Activated CD4-positive, alpha-beta T cell treated with anti-CD3 and anti-CD28 coated beads for 36 hours (primary cell): ENCODE measurements at regions of chr11 and their contacts with region 1.

Region 1: DNA sequence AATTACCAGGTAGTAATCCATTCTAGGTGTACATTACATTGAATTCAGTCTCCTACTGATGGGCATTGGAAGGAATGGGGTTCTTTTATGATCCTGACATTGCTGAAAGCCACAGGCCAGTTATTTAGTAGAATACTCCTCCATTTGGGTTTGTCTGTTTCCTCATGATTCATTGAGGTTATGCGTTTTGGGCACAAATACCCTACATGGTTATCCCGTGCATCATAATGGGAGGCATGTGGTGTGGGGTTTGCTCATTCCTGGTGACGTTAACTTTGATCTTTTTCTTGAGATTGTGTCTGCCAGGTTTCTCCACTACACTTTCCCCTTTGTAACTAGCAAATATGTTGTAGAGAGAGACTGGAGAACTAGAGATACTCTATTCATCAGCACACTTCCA is 5.5 kb downstream of the FOLR3 start:
- DNase-seq: peak; percentile 62
- ATAC-seq: peak; percentile 87
- H3K4me3 Mint-ChIP-seq: no peak overlapping the region
- H3K27ac Mint-ChIP-seq: no peak overlapping the region
- H3K4me1 Mint-ChIP-seq: peaks cover 16% of the 10 kb centered on the region
- H3K27me3 Mint-ChIP-seq: peaks cover 14% of the 10 kb centered on the region

Region 2: GRCh38 chr11:71977743-71978418 is 163.2 kb before region 1 on chr11:
- CTCF ChIA-PET with region 1: interaction called, 25 read pairs
- POLR2A ChIA-PET with region 1: no interaction called
- intact Hi-C with region 1: loop called (anchors 2 to 5 kb)
- DNase-seq: peak; percentile 69
- ATAC-seq: peak; percentile 63
- H3K4me3 Mint-ChIP-seq: no peak overlapping the region
- H3K27ac Mint-ChIP-seq: no peak overlapping the region
- H3K4me1 Mint-ChIP-seq: peaks cover 2% of the 10 kb centered on the region
- H3K27me3 Mint-ChIP-seq: no peaks in the 10 kb centered on the region

Region 3: DNA sequence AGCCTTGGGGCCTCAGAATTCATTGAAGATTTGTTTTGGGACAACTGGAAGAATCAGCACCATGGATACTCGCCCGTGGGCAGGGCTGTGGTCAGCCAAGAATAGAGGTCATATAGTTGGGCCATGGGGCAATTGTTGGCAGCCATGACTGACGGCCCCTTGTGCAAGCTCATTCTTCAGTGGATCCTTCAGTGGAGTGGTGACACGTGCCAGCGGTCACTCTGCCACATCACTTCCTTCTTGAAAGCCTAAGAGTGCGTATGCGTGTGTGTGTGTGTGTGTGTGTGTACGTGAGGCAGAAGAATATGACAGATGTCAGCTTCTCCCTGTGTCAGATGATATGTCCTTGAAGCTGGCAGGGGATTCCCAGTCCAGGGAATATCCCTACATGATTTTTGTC is 144.1 kb before region 1 on chr11:
- CTCF ChIA-PET with region 1: no interaction called
- POLR2A ChIA-PET with region 1: no interaction called
- intact Hi-C with region 1: no loop called
- DNase-seq: no peak
- ATAC-seq: no peak
- H3K4me3 Mint-ChIP-seq: no peak overlapping the region
- H3K27ac Mint-ChIP-seq: no peak overlapping the region
- H3K4me1 Mint-ChIP-seq: peaks cover 20% of the 10 kb centered on the region
- H3K27me3 Mint-ChIP-seq: no peaks in the 10 kb centered on the region

Region 4: DNA sequence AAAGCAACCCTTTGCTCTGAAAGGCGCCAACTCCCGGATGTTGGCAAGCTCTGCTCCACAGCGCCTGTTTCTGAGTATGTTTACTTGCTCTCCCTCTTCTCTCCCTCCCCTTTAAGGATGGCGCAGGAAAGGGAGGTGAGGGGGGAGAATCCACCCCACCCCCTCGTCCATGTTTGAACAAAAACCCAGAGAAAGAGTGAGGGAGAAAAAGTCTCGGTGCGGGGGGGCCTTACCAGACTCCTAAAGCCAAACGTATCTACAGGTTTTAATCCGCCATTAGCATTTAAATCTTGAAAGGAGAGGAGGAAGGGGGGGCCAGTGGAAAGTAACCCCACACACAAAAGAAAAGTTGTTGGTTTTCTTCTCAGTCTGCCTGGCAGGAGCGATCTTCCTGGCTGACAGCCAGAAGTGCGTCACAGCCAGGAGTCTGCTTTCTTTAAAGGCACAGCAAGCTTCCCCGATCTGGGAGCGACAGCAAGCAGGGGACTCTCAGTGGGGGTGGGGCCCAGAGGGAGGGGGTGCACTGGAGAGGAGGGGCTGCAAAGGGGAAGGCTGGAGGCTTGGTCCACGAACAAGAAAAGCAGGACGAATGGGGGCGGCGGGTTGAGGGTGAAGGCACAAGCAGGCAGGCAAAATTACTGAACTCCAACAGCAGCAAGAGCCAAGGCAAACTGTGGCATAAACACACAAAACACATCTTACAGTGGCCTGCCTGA is 100.2 kb before region 1 on chr11:
- CTCF ChIA-PET with region 1: interaction called, 10 read pairs
- POLR2A ChIA-PET with region 1: no interaction called
- intact Hi-C with region 1: no loop called
- DNase-seq: peak; percentile 86
- ATAC-seq: peak; percentile 76
- H3K4me3 Mint-ChIP-seq: no peak overlapping the region
- H3K27ac Mint-ChIP-seq: no peak overlapping the region
- H3K4me1 Mint-ChIP-seq: peaks cover 35% of the 10 kb centered on the region
- H3K27me3 Mint-ChIP-seq: no peaks in the 10 kb centered on the region

Region 5: DNA sequence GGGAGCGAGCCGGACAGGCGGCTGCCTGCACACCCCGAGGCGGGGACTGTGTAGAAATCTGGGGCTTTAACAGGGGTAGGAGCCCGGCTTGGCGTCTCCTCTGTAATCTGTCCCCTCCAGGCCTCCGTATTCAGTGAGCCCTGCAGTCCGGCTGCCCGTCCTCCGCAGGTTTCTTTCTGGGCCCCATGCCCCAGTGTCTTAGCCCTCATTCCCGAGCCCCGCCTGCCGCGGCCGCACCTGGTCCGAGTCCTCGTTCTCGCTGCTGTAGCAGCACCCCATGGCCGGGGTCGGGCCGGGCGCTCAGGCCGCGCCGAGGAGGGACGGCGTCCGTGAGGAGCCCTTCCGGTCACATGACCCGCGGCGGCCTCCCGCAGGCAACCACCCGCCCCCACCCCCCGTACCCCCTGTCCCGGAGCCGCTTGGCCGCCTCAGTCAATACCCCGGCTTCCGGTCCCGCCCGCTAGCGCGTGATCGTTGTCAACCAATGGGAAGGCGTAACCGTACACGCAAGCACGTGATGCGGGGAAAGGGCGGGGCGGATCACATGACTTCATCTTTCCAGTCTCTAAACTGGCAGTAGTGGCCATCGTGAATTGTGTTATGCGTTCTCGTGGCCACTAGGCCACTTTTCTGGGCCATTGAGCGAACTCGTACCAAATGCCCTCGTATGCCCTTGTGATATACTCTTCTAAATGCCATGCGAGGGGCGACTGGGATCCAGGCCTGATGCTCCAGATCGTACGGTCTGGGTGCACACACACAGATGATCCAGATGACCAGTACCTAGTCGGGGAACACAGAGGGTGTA is 37.9 kb before region 1 on chr11 and contains the start of gene LAMTOR1:
- CTCF ChIA-PET with region 1: interaction called, 8 read pairs
- POLR2A ChIA-PET with region 1: no interaction called
- intact Hi-C with region 1: loop called in 1 of 2 experiments (anchors 2 kb)
- DNase-seq: peak; percentile 99
- ATAC-seq: peak; percentile 98
- H3K4me3 Mint-ChIP-seq: peak within 1 kb of the TSS; percentile 97
- H3K27ac Mint-ChIP-seq: peak within 1 kb of the TSS; percentile 95
- H3K4me1 Mint-ChIP-seq: peaks cover 38% of the 10 kb centered on the region
- H3K27me3 Mint-ChIP-seq: no peaks in the 10 kb centered on the region
- total RNA-seq, gene LAMTOR1: 50.7 to 52.2 TPM

Region 6: DNA sequence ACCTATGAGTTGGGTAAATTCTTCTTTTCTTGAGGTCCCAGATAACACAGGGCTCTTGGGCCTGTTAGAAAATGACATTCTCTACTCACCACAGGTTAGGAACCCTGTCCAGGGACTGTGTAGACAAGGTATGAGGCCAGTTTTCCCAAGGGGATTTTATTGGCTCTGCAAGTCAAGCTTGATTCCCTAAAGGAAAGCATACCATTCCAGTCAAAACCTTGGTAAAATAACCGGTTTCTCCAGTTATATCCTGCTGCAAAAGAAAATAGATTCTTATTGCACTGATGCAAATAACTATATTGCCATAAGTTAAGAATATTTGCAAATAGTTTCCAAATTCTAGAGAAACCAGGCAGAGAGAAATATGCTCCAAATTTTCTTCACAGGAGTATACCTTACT is 15.1 kb before region 1 on chr11:
- CTCF ChIA-PET with region 1: interaction called, 11 read pairs
- POLR2A ChIA-PET with region 1: no interaction called
- intact Hi-C with region 1: no loop called
- DNase-seq: no peak
- ATAC-seq: no peak
- H3K4me3 Mint-ChIP-seq: no peak overlapping the region
- H3K27ac Mint-ChIP-seq: no peak overlapping the region
- H3K4me1 Mint-ChIP-seq: no peaks in the 10 kb centered on the region
- H3K27me3 Mint-ChIP-seq: peaks cover 7% of the 10 kb centered on the region

Region 7: DNA sequence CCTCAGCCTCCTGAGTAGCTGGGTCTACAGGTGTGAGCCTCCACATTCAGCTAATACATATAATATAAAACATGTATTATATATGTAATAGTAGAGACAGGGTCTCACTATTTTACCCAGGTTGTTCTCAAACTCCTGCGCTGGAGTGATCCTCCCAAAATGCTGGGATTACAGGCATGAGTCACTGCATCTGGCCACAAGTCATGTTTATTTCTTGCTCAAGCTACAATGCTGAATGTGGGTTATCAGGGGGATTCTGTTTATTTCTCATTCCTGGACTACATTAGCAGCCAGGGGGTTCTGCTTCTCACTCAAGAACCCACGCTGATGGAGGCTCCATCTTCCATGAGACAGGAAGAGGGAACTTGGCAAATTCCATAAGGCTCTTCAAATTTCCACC is 19.3 kb after region 1 on chr11:
- CTCF ChIA-PET with region 1: interaction called, 19 read pairs
- POLR2A ChIA-PET with region 1: no interaction called
- intact Hi-C with region 1: no loop called
- DNase-seq: no peak
- ATAC-seq: no peak
- H3K4me3 Mint-ChIP-seq: no peak overlapping the region
- H3K27ac Mint-ChIP-seq: no peak overlapping the region
- H3K4me1 Mint-ChIP-seq: no peaks in the 10 kb centered on the region
- H3K27me3 Mint-ChIP-seq: peaks cover 9% of the 10 kb centered on the region

Region 8: DNA sequence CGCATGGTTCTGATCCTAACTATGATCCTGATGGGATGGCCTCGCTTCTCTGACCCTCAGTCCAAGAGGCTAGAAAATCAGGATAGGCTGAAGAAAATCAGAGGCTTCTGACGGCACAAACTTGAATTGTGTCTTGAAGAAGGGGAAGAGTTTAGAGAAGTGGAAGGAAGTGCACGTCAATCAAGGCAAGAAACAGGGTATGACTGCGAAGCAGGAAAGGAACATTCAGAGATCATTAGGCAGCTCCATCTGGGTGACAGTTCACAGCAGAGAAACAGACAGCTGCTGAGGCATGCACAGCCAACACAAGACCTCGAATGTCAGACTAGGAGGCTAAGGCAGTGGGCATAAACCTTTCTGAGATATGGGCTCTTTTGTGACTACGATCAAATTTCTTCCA is 263.9 kb after region 1 on chr11:
- CTCF ChIA-PET with region 1: no interaction called
- POLR2A ChIA-PET with region 1: no interaction called
- intact Hi-C with region 1: no loop called
- DNase-seq: no peak
- ATAC-seq: no peak
- H3K4me3 Mint-ChIP-seq: no peak overlapping the region
- H3K27ac Mint-ChIP-seq: no peak overlapping the region
- H3K4me1 Mint-ChIP-seq: no peaks in the 10 kb centered on the region
- H3K27me3 Mint-ChIP-seq: no peaks in the 10 kb centered on the region

Region 9: GRCh38 chr11:72483412-72484186 is 342.5 kb after region 1 on chr11:
- CTCF ChIA-PET with region 1: no interaction called
- POLR2A ChIA-PET with region 1: no interaction called
- intact Hi-C with region 1: no loop called
- DNase-seq: no peak
- ATAC-seq: peak; percentile 42
- H3K4me3 Mint-ChIP-seq: no peak overlapping the region
- H3K27ac Mint-ChIP-seq: no peak overlapping the region
- H3K4me1 Mint-ChIP-seq: peaks cover 5% of the 10 kb centered on the region
- H3K27me3 Mint-ChIP-seq: peaks cover 2% of the 10 kb centered on the region